ENCODE measurements at regions of chr13 and their contacts with region 1.

Region 1: DNA sequence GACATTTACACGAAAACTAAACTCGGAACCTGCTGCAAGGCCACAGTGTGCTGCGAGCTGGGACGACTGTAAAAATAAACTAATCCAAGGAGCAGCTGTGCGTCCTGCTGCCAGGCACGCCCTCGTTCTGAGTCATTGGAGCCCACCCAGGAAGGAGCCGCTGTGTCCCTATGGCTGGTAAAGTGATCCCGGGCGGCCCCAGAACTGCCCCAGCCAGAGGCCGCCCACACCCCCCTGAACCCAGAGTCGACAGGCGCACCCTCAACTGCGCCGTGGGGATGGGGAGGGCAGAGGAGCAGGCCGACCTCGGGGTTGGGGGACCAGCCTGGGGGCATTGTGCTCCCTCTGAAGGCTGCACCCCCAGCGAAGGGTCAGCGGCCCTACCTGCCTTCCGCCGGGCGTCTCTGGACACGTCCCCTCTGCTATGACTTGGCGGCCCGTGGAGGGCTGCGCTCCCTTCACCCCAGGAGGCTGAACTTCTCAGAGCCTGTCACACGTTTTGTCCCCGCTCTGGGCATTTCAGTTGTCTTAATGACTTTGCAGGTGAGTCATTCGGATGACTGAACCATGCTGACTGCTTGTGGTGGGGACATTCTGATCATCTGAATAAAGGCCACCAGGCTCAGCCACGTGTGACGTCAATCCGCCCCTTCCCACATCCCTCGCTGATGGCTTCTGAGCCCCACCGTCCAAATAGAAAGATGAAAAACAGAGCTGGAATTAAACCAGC is 42.7 kb downstream of the ADPRHL1 start:
- DNase-seq: peak; percentile 89
- ATAC-seq: peak; percentile 86
- H3K4me3 ChIP-seq: peak overlapping the region; percentile 73
- H3K27ac ChIP-seq: peak overlapping the region; percentile 100
- H3K4me1 ChIP-seq: peaks cover 20% of the 10 kb centered on the region
- H3K27me3 ChIP-seq: no peaks in the 10 kb centered on the region
- CTCF ChIP-seq: no peak

Region 2: DNA sequence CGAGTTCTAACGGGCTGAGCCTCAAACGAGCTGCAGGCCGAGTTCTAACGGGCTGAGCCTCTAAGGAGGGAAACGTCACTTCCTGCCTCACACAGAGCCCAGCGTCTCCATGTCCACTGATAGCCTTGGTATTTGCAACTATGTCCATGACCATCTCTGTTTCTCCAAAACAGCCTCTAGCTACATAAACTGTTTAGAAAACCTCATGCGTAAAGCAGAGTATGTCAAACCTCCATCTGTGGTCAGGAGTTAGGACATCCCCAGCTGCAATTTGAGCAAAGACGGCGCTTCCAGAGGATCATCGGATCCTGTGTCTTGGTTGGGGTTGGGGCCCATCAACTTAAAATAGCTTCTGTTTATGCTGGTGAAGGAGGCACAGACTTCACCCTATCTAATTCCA is 700.9 kb after region 1 on chr13:
- CTCF ChIA-PET with region 1: no interaction called
- POLR2A ChIA-PET with region 1: interaction called, 10 read pairs
- intact Hi-C with region 1: no loop called
- DNase-seq: no peak
- ATAC-seq: no peak
- H3K4me3 ChIP-seq: no peak overlapping the region
- H3K27ac ChIP-seq: no peak overlapping the region
- H3K4me1 ChIP-seq: peaks cover 17% of the 10 kb centered on the region
- H3K27me3 ChIP-seq: no peaks in the 10 kb centered on the region
- CTCF ChIP-seq: no peak

Measured in PC-3 (cell line).